ENCODE measurements at regions of chr6 and their contacts with region 1.

Region 1: DNA sequence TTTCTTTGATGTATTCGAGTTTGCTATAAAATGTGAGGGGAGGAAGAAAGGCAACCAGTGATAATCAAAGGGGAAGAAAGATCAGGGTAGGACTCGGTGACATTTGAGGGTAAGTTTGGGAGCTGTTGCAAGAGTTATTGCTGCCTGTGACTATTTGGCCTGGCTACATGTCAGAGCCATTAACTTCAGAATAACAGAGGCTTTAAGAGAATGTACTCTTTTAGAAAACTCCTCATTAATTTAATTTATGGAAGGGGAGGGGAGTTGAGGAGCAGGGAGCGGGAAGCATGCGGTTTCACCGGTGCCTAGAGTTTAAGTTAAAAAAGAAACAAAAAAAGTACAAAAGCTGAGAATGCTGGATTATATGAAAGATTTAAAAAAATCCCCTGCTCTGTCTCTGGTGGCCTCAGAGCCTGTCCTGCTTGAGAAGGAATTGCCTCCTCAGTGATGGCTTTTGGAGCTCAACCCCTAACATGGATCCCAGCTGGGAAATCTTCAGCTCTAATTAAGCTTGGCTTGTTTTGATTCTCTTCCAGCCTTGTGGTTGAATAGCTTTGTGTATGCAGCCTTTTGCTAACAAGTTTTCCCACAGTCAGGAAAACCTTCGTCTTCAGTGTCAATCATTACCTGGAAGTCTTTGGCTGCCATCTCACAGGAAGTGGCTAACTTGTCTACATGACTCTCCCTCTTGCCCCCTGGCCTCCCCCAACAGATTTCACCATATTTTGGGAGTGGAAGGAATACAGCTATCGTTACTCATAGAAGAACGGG is 238.2 kb downstream of the SOX4 start:
- DNase-seq: no peak
- H3K4me3 Mint-ChIP-seq: no peak overlapping the region
- H3K27ac Mint-ChIP-seq: no peak overlapping the region
- H3K4me1 Mint-ChIP-seq: peaks cover 17% of the 10 kb centered on the region
- H3K27me3 Mint-ChIP-seq: no peaks in the 10 kb centered on the region
- CTCF ChIP-seq: no peak

Region 2: DNA sequence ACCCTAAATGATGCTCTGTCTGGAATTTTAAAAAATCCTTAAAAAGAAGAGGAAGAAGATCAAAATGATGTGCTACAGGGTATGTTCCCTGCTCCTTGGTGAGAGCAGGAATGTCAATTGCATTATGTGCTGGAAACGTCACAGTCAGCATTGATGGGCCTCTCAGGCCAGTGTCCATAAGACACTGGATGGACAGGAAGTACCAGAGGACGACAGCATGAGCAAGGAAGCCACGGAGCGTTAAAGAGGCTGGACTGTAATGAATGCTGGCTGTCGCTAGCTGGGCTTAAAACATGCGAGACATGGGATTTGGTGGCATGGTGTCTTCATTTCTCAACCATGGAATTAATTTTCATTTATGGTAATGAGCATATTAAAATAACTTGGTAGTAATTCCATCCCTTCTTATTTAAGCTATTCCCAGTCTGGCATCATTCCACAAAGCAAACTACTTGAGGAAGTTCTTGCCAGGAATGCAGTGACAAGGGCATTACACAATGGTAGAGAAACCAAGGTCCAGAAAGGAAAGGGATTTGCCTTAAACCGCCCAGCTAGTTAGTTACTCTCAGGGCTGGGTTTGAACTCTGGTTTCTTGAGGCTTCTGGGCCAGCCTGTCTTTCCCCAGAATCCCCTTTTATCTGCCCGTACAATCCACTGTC is 404.7 kb before region 1 on chr6:
- CTCF ChIA-PET with region 1: no interaction called
- intact Hi-C with region 1: no loop called
- DNase-seq: no peak
- H3K4me3 Mint-ChIP-seq: no peak overlapping the region
- H3K27ac Mint-ChIP-seq: no peak overlapping the region
- H3K4me1 Mint-ChIP-seq: no peaks in the 10 kb centered on the region
- H3K27me3 Mint-ChIP-seq: no peaks in the 10 kb centered on the region
- CTCF ChIP-seq: no peak

Region 3: DNA sequence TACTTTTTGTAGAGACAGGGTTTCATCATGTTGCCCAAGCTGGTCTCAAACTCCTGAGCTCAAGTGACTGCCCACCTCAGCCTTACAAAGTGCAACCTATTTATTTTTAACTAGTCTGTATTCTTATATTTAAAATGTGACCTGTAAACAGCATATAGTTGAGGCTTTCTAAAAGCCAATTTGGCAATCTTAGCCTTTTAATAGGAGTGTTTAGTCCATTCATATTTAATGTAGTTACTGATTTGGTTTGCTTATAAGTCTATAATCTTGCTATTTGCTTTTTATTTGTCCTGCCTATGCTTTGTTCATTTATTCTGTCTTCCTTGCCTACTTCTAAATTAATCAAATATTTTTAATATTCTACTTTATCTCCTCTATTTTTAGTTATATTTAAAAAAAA is 253.2 kb before region 1 on chr6:
- CTCF ChIA-PET with region 1: interaction called, 12 read pairs
- intact Hi-C with region 1: no loop called
- DNase-seq: no peak
- H3K4me3 Mint-ChIP-seq: no peak overlapping the region
- H3K27ac Mint-ChIP-seq: no peak overlapping the region
- H3K4me1 Mint-ChIP-seq: no peaks in the 10 kb centered on the region
- H3K27me3 Mint-ChIP-seq: no peaks in the 10 kb centered on the region
- CTCF ChIP-seq: no peak